ENCODE measurements at regions of chr12 and their contacts with region 1.

Region 1: DNA sequence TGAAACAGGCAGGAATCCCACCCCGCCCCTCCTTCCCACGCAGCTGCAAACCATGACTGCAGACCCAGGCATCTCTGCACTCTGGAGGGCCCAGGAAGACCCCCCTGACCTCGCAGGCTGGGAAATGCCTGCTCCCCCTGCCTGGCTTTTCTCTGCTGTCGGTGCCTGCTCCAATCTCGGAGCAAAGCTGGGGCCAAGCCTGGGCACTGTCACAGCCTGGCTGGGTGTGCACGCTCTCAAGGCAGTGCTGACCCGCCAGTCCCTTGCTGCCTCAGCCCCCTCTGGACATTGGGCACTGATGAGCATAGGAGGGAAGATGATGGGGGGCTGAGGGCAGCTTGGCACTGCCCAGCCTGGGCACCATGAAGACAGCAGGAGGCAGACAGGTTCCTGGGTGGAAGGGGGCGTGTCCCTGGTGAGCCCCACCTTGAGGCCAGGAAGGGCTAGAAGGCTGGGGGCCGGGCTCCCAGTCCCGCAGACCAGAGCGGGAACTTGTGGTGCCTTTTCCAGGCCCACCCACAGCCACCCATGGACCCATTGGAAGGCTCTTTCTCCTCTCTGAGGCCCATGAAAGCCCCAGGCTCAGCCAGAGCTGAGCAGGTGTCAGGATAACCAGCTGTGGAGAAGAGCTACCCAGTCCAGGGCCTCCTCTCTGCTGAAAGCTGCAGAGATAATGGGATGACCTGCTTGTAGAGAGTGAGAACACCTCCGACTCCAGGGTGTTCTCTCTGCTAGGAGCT is 10.7 kb upstream of the ZNF605 start:
- DNase-seq: no peak
- H3K4me3 ChIP-seq: no peak overlapping the region
- CTCF ChIP-seq: no peak

Region 2: GRCh38 chr12:132908145-132909044 is 58.5 kb before region 1 on chr12:
- in situ Hi-C with region 1: loop called (anchors 5 kb)
- DNase-seq: peak; percentile 93
- H3K4me3 ChIP-seq: peak overlapping the region; percentile 61
- CTCF ChIP-seq: no peak